Natural killer cell (primary cell): ENCODE measurements at regions of chr15 and their contacts with region 1.

Region 1: DNA sequence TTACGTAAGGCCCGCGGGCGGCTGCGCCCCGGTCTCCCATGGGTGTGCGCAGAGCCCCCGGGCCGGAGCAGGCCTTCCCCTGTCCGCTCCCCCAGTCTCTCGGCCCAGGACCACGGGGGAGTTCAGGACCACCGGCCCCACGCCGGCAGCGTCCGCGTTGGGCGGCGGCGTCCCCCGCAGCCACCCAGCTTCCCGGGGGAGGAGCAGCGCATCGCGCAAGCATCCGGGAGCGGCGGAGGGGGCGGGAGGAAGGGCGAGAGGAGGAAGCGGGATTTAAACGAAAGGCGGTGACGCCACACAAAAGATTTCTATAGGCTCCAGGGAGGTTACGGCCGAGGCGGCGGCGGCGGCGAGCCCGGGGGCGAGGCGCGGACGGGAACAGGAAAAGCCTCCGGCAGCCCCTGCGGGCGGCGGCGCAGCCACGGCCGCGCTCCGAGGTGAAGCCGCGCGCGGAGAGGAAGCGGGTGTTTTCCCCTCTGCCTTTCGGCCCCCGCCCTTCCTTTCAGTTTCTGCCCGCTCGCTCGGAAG is at the start of gene TLNRD1:
- DNase-seq: peak; percentile 73 to 92
- ATAC-seq: peak; percentile 62 to 78 (median 78)
- H3K4me3 ChIP-seq: peak within 1 kb of the TSS; percentile 94
- H3K4me3 Mint-ChIP-seq: peak within 1 kb of the TSS; percentile 94
- H3K27ac ChIP-seq: peak within 1 kb of the TSS; percentile 98
- H3K27ac Mint-ChIP-seq: peak within 1 kb of the TSS; percentile 94 to 96
- H3K4me1 ChIP-seq: peaks cover 20% of the 10 kb centered on the region
- H3K4me1 Mint-ChIP-seq: peaks cover 39 to 47% of the 10 kb centered on the region in 2 donors
- H3K27me3 ChIP-seq: no peaks in the 10 kb centered on the region
- H3K27me3 Mint-ChIP-seq: no peaks in the 10 kb centered on the region
- CTCF ChIP-seq: no peak
- total RNA-seq, gene TLNRD1: 13.4 to 19.6 (median 17.5) TPM

Region 2: GRCh38 chr15:80989518-80990478 is 10.9 kb before region 1 on chr15 and contains the start of gene MESD:
- intact Hi-C with region 1: loop called (anchors 1 kb)
- DNase-seq: peak; percentile 93 to 98
- ATAC-seq: peak; percentile 99 to 100 (median 100)
- H3K4me3 ChIP-seq: peak within 1 kb of the TSS; percentile 84
- H3K4me3 Mint-ChIP-seq: peak within 1 kb of the TSS; percentile 95
- H3K27ac ChIP-seq: peak within 1 kb of the TSS; percentile 81
- H3K27ac Mint-ChIP-seq: peak within 1 kb of the TSS; percentile 94 to 95
- H3K4me1 ChIP-seq: peaks cover 19% of the 10 kb centered on the region
- H3K4me1 Mint-ChIP-seq: peaks cover 39 to 44% of the 10 kb centered on the region in 2 donors
- H3K27me3 ChIP-seq: no peaks in the 10 kb centered on the region
- H3K27me3 Mint-ChIP-seq: no peaks in the 10 kb centered on the region
- CTCF ChIP-seq: no peak
- total RNA-seq, gene MESD: 14.7 to 26.0 (median 24.5) TPM